ENCODE measurements at regions of chr5 and their contacts with region 1.

Region 1: GRCh38 chr5:93800988-93801811 is 59.8 kb upstream of the POU5F2 start:
- DNase-seq: peak; percentile 64
- ATAC-seq: peak; percentile 73
- H3K4me3 ChIP-seq: no peak overlapping the region
- H3K27ac ChIP-seq: no peak overlapping the region
- H3K4me1 ChIP-seq: no peaks in the 10 kb centered on the region
- H3K27me3 ChIP-seq: no peaks in the 10 kb centered on the region
- CTCF ChIP-seq: peak; percentile 75
- POLR2A ChIP-seq: no peak
- RAD21 ChIP-seq: peak; percentile 85

Region 2: GRCh38 chr5:92552206-92553160 is 1248.7 kb before region 1 on chr5:
- CTCF ChIA-PET with region 1: no interaction called
- POLR2A ChIA-PET with region 1: no interaction called
- dilution Hi-C with region 1: no loop called
- in situ Hi-C with region 1: no loop called
- intact Hi-C with region 1: loop called (anchors 10 kb)
- DNase-seq: peak; percentile 99
- ATAC-seq: peak; percentile 83
- H3K4me3 ChIP-seq: no peak overlapping the region; the same call in 1 of the 2 replicates
- H3K27ac ChIP-seq: peak overlapping the region; percentile 53
- H3K4me1 ChIP-seq: no peaks in the 10 kb centered on the region; the same call in 1 of the 2 replicates
- H3K27me3 ChIP-seq: no peaks in the 10 kb centered on the region
- CTCF ChIP-seq: no peak
- POLR2A ChIP-seq: no peak
- RAD21 ChIP-seq: peak; percentile 24; the same call in 1 of the 2 replicates

Region 3: GRCh38 chr5:92916036-92916435 is 885.2 kb before region 1 on chr5:
- CTCF ChIA-PET with region 1: no interaction called
- POLR2A ChIA-PET with region 1: no interaction called
- dilution Hi-C with region 1: no loop called
- in situ Hi-C with region 1: no loop called
- intact Hi-C with region 1: loop called (anchors 10 kb)
- DNase-seq: peak; percentile 44
- ATAC-seq: peak; percentile 49
- H3K4me3 ChIP-seq: no peak overlapping the region
- H3K27ac ChIP-seq: no peak overlapping the region
- H3K4me1 ChIP-seq: peaks cover 2% of the 10 kb centered on the region; the same call in 1 of the 2 replicates
- H3K27me3 ChIP-seq: no peaks in the 10 kb centered on the region
- CTCF ChIP-seq: peak; percentile 44
- POLR2A ChIP-seq: no peak
- RAD21 ChIP-seq: peak; percentile 43

Region 4: GRCh38 chr5:93588352-93589105 is 212.7 kb before region 1 on chr5:
- CTCF ChIA-PET with region 1: interaction called, 3 read pairs
- POLR2A ChIA-PET with region 1: no interaction called
- dilution Hi-C with region 1: no loop called
- in situ Hi-C with region 1: no loop called
- intact Hi-C with region 1: loop called (anchors 2 kb)
- DNase-seq: peak; percentile 59
- ATAC-seq: no peak
- H3K4me3 ChIP-seq: peak overlapping the region; percentile 99
- H3K27ac ChIP-seq: peak overlapping the region; percentile 99
- H3K4me1 ChIP-seq: peaks cover 20% of the 10 kb centered on the region
- H3K27me3 ChIP-seq: no peaks in the 10 kb centered on the region
- CTCF ChIP-seq: no peak
- POLR2A ChIP-seq: no peak
- RAD21 ChIP-seq: no peak

Region 5: DNA sequence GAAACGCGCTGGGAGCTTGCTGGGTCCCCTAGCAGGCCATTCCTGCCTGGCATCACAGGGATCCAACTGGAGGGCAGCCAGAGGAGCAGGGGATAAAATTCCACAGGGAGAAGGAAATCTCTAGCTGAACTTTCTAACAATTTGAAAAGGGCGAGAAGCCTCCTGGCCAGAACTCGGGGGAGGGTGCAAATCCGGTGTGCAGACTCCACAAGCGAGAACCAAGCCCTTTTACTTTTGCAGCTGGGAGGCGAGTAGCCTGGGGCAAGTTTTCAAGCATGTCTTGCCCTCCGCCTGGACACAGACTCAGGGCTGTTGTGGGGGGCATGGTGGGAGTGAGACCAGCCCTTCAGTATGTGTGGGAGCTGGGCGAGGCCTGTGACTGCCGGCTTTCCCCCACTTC is 45.5 kb before region 1 on chr5:
- CTCF ChIA-PET with region 1: no interaction called
- POLR2A ChIA-PET with region 1: no interaction called
- dilution Hi-C with region 1: no loop called
- in situ Hi-C with region 1: no loop called
- intact Hi-C with region 1: no loop called
- DNase-seq: no peak
- ATAC-seq: no peak
- H3K4me3 ChIP-seq: no peak overlapping the region
- H3K27ac ChIP-seq: no peak overlapping the region
- H3K4me1 ChIP-seq: no peaks in the 10 kb centered on the region
- H3K27me3 ChIP-seq: no peaks in the 10 kb centered on the region
- CTCF ChIP-seq: no peak
- POLR2A ChIP-seq: no peak
- RAD21 ChIP-seq: no peak

Region 6: DNA sequence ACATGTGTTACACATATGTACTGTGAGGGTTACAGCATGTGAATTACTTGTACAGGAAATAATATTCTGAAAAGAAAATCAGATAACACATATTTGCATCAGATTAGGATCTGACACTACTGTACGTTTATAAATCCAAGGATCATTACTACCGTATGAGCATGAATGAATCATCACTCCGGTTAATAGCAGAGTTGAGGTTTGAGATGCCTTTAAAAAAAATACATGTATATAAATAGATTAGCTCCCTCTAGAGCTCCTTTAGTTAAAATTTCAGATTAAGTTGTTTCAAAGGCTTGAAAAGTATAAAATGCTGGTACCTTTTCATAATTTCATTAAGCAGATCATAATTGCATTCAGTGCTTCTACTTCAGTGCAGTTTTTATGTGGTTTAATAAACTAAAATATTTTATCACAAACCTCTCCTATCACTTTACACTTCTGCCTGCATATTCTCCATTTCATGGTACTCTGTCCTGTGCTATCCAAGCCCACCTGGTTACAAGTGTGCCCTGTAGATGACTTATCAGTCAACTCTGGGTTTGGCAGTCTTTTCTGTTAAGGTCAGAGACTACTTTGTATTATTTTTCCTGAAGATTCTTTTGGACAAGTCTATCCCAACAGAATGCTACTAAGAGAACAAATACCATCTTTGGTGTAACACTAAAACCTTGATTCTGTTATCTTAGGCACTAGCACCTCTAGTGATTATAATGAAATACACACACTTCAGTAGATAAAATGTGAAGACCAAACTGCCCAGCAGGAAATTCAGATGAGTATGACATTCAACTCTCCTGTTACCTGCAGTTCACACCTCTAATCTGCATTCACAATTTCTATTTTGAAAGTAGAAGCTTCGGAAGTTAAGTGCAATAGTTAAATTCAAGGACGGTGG is 11.8 kb before region 1 on chr5:
- CTCF ChIA-PET with region 1: interaction called, 21 read pairs
- POLR2A ChIA-PET with region 1: no interaction called
- dilution Hi-C with region 1: no loop called
- in situ Hi-C with region 1: no loop called
- intact Hi-C with region 1: no loop called
- DNase-seq: peak; percentile 88
- ATAC-seq: peak; percentile 76
- H3K4me3 ChIP-seq: no peak overlapping the region
- H3K27ac ChIP-seq: no peak overlapping the region
- H3K4me1 ChIP-seq: peaks cover 4% of the 10 kb centered on the region; the same call in 1 of the 2 replicates
- H3K27me3 ChIP-seq: no peaks in the 10 kb centered on the region
- CTCF ChIP-seq: peak; percentile 30; the same call in 1 of the 2 replicates
- POLR2A ChIP-seq: no peak
- RAD21 ChIP-seq: no peak; the same call in 1 of the 2 replicates

Region 7: GRCh38 chr5:93894601-93895354 is 93.6 kb after region 1 on chr5:
- CTCF ChIA-PET with region 1: interaction called, 3 read pairs
- POLR2A ChIA-PET with region 1: no interaction called
- dilution Hi-C with region 1: no loop called
- in situ Hi-C with region 1: no loop called
- intact Hi-C with region 1: loop called (anchors 5 kb)
- DNase-seq: peak; percentile 21
- ATAC-seq: peak; percentile 46; the same call in 1 of the 2 replicates
- H3K4me3 ChIP-seq: no peak overlapping the region
- H3K27ac ChIP-seq: no peak overlapping the region
- H3K4me1 ChIP-seq: no peaks in the 10 kb centered on the region
- H3K27me3 ChIP-seq: no peaks in the 10 kb centered on the region
- CTCF ChIP-seq: peak; percentile 45
- POLR2A ChIP-seq: no peak
- RAD21 ChIP-seq: no peak

Region 8: GRCh38 chr5:93915142-93915553 is 113.9 kb after region 1 on chr5:
- CTCF ChIA-PET with region 1: no interaction called
- POLR2A ChIA-PET with region 1: no interaction called
- dilution Hi-C with region 1: no loop called
- in situ Hi-C with region 1: no loop called
- intact Hi-C with region 1: loop called (anchors 10 kb)
- DNase-seq: peak; percentile 73
- ATAC-seq: peak; percentile 56; the same call in 1 of the 2 replicates
- H3K4me3 ChIP-seq: no peak overlapping the region
- H3K27ac ChIP-seq: no peak overlapping the region
- H3K4me1 ChIP-seq: no peaks in the 10 kb centered on the region
- H3K27me3 ChIP-seq: no peaks in the 10 kb centered on the region
- CTCF ChIP-seq: peak; percentile 69
- POLR2A ChIP-seq: no peak
- RAD21 ChIP-seq: peak; percentile 75